PC-3 (cell line): ENCODE measurements at regions of chr13 and their contacts with region 1.

Region 1: DNA sequence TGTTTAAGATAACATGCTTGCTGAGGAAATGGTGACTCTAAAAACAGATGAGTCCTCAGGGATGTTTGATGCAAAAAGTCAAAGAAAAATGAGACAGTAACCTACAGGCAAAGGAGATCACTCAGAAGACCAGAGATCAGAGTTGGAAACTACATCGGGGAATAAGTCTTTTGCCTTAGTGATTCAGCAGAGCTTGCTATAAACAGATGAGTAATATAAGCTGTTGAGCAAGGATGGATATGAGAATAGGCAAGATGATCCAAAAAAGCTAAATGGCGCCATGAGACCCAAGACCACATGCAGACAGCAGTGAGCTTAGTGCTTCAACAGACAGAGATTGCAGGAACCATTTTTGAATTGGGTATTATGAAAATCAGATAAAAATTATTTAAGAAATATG is 168.6 kb downstream of the POSTN start:
- DNase-seq: no peak
- ATAC-seq: no peak
- H3K4me3 ChIP-seq: no peak overlapping the region
- H3K27ac ChIP-seq: no peak overlapping the region
- H3K4me1 ChIP-seq: no peaks in the 10 kb centered on the region
- H3K27me3 ChIP-seq: no peaks in the 10 kb centered on the region
- CTCF ChIP-seq: no peak

Region 2: DNA sequence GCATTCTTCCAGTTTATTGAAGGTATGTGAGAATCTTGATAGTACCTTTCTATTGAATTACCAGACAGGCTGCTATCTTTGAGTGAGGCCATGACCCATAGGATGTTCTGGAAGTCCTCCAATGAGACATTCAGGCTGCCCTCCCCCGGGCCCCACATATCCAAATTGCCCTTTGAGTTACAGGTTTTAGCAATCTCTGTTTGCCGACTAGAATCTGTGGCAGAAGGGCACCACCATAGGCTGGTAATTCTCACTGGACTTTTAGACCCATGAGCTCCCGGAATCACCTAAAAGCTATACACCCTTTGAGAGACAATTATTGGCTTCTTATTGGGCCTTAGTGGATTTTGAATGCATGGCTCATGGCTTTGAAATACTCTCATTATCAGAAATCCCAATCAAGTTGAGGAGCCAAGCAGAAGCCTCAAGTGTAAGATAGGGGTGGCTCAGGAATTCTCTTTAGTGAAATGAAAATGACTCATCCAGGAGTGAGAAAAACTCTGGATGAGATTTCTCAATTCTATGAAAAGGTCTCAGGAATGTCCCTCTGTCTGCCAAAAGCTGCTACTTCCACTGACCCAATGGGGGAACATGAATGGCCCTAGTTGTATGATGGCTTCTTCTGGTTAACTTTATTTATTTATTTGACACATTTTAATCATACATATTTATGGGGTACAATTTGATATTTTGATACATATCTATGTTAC is 152.4 kb before region 1 on chr13:
- CTCF ChIA-PET with region 1: no interaction called
- POLR2A ChIA-PET with region 1: no interaction called
- intact Hi-C with region 1: no loop called
- DNase-seq: no peak
- ATAC-seq: no peak
- H3K4me3 ChIP-seq: no peak overlapping the region
- H3K27ac ChIP-seq: no peak overlapping the region
- H3K4me1 ChIP-seq: no peaks in the 10 kb centered on the region
- H3K27me3 ChIP-seq: no peaks in the 10 kb centered on the region
- CTCF ChIP-seq: no peak

Region 3: GRCh38 chr13:37544995-37545394 is 115.0 kb after region 1 on chr13:
- CTCF ChIA-PET with region 1: no interaction called
- POLR2A ChIA-PET with region 1: interaction called, 12 read pairs
- intact Hi-C with region 1: no loop called
- DNase-seq: no peak
- ATAC-seq: no peak
- H3K4me3 ChIP-seq: no peak overlapping the region
- H3K27ac ChIP-seq: no peak overlapping the region
- H3K4me1 ChIP-seq: no peaks in the 10 kb centered on the region
- H3K27me3 ChIP-seq: peaks cover 9% of the 10 kb centered on the region
- CTCF ChIP-seq: no peak